HepG2 (cell line): ENCODE measurements at regions of chr5 and their contacts with region 1.

Region 1: GRCh38 chr5:74640450-74640953 is at the start of gene ENC1:
- DNase-seq: peak; percentile 95
- ATAC-seq: peak; percentile 83
- H3K4me3 ChIP-seq: peak within 1 kb of the TSS; percentile 92 to 100 (median 99)
- H3K27ac ChIP-seq: peak within 1 kb of the TSS; percentile 83
- H3K4me1 ChIP-seq: peaks cover 43% of the 10 kb centered on the region
- H3K27me3 ChIP-seq: no peaks in the 10 kb centered on the region; a peak in 2 of 5 replicates
- CTCF ChIP-seq: peak; percentile 68
- EP300 ChIP-seq: peak in 1 of 2 experiments; percentile 60; a peak in 2 of 4 replicates
- POLR2A ChIP-seq: peak in 1 of 2 experiments; percentile 98; a peak in 2 of 4 replicates
- RAD21 ChIP-seq: peak; percentile 80
- total RNA-seq, gene ENC1: 63.8 and 69.9 TPM in 2 replicates

Region 2: DNA sequence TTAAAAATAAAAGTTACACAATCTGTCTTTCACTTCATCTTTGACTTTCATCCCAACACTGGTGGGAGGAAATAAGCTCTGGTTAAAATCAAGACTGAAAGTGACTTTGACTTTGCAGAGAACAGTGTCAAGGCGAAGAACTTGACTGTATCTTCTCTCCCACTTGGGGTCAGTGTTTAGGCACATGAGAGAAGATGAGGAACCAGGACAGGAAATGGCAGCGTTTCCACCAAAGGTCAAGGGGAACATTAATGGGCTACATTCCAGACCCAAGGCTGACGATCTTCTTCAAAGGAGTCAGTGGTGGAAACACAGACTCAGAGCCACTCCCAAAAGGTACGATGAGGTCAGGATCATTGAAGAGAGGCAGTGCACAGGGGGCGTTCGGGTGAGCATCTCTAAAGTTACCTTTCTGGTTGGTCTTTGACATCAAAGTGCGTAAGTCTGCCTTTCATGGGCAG is 605.0 kb before region 1 on chr5:
- CTCF ChIA-PET with region 1: no interaction called
- POLR2A ChIA-PET with region 1: interaction called, 3 read pairs
- in situ Hi-C with region 1: loop called (anchors 10 kb)
- intact Hi-C with region 1: no loop called
- DNase-seq: peak; percentile 49
- ATAC-seq: peak; percentile 61
- H3K4me3 ChIP-seq: no peak overlapping the region
- H3K27ac ChIP-seq: no peak overlapping the region
- H3K4me1 ChIP-seq: peaks cover 6% of the 10 kb centered on the region; the same call in 1 of the 2 replicates
- H3K27me3 ChIP-seq: peaks cover 0 to 3% of the 10 kb centered on the region in 2 experiments; a peak in 2 of 5 replicates
- CTCF ChIP-seq: peak; percentile 74
- EP300 ChIP-seq: no peak
- POLR2A ChIP-seq: no peak
- RAD21 ChIP-seq: no peak

Region 3: GRCh38 chr5:74394916-74395781 is 245.4 kb before region 1 on chr5:
- CTCF ChIA-PET with region 1: no interaction called
- POLR2A ChIA-PET with region 1: interaction called, 31 read pairs
- in situ Hi-C with region 1: loop called (anchors 5 kb)
- intact Hi-C with region 1: no loop called
- DNase-seq: peak; percentile 60
- ATAC-seq: peak; percentile 81
- H3K4me3 ChIP-seq: peak overlapping the region in 1 of 3 experiments; percentile 22; a peak in 1 of 6 replicates
- H3K27ac ChIP-seq: no peak overlapping the region
- H3K4me1 ChIP-seq: peaks cover 45% of the 10 kb centered on the region
- H3K27me3 ChIP-seq: no peaks in the 10 kb centered on the region
- CTCF ChIP-seq: peak; percentile 75
- EP300 ChIP-seq: no peak
- POLR2A ChIP-seq: no peak
- RAD21 ChIP-seq: peak; percentile 75

Region 4: GRCh38 chr5:74500110-74500917 is 140.2 kb before region 1 on chr5:
- CTCF ChIA-PET with region 1: no interaction called
- POLR2A ChIA-PET with region 1: interaction called, 62 read pairs
- in situ Hi-C with region 1: loop called (anchors 5 kb)
- intact Hi-C with region 1: loop called (anchors 1 kb)
- DNase-seq: peak; percentile 96
- ATAC-seq: peak; percentile 83
- H3K4me3 ChIP-seq: peak overlapping the region; percentile 43 to 50 (median 47); a peak in 5 of 6 replicates
- H3K27ac ChIP-seq: peak overlapping the region; percentile 72
- H3K4me1 ChIP-seq: peaks cover 80% of the 10 kb centered on the region
- H3K27me3 ChIP-seq: no peaks in the 10 kb centered on the region
- CTCF ChIP-seq: no peak
- EP300 ChIP-seq: peak in 1 of 2 experiments; percentile 94; a peak in 2 of 4 replicates
- POLR2A ChIP-seq: 0 out of 4 replicates have a peak, but pooled peaks of 1 of the 2 experiments have one; percentile 19
- RAD21 ChIP-seq: no peak

Region 5: DNA sequence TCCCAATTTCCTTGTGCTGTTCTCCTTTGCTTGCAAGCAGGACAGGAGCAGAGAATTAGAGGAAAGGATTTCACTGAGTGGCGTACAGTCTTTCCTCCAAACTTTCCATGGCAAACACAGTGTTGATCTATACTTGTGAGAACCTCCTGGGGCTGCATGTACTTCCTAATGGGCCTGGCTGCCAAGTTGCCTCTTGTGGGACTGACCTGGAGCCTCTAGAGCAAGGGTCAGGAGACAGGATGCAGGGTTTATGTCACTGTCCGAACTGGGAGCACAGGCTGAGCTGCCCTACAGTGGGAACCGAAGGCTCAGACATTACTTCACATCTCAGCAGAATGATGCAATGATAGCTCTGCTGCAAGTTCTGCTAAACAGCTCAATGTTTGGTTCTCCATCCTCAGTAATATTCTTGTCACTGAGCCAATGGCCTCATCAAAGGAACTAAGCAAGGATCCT is 102.3 kb before region 1 on chr5:
- CTCF ChIA-PET with region 1: no interaction called
- POLR2A ChIA-PET with region 1: interaction called, 36 read pairs
- in situ Hi-C with region 1: no loop called
- intact Hi-C with region 1: loop called (anchors 5 kb)
- DNase-seq: peak; percentile 89
- ATAC-seq: peak; percentile 99
- H3K4me3 ChIP-seq: peak overlapping the region in 1 of 3 experiments; percentile 32; a peak in 2 of 6 replicates
- H3K27ac ChIP-seq: peak overlapping the region; percentile 51
- H3K4me1 ChIP-seq: peaks cover 61% of the 10 kb centered on the region
- H3K27me3 ChIP-seq: no peaks in the 10 kb centered on the region
- CTCF ChIP-seq: 0 out of 2 replicates have a peak, but pooled peaks have one; percentile 8
- EP300 ChIP-seq: peak; percentile 57 to 87; a peak in 2 of 4 replicates
- POLR2A ChIP-seq: 0 out of 4 replicates have a peak, but pooled peaks of 1 of the 2 experiments have one; percentile 18
- RAD21 ChIP-seq: no peak

Region 6: DNA sequence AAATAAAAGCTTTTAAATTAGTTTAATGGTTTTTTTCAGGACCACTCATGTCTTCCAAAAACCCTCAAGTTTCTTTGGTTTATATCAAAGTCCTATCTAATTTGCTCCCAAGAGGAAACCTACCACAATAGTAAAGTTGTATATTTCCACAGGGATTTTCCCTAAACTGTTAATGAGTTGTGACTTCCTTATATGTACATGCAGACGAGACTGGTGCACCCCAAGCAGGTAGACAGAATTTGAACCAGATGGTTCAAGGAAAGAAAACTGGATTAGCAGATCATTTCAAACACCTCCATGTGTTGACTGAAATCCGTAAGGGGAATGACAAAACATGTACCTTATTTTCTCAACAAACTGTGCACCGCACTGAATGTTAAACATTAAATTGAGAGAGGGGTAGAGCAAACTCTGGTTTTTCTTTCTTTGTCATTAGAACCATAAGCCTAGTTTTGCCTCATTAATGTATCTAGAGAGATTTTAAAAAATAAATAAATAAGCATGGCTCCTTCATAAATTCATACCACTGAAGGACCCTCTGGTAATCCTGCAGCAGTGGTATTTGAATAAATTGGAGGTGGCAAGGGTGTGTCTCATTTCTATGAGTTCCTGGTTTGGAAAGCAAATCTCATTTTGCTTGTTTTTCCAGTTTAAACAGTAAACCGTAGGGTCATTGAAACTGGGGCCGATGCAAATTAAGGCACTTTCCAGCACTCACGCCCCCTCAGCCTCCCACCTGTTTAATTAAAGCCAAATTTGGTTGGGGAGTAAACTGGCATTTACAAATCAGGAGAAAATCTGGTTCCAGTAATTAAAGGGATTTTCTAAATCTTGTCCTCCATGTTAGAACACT is 51.1 kb before region 1 on chr5:
- CTCF ChIA-PET with region 1: no interaction called
- POLR2A ChIA-PET with region 1: interaction called, 15 read pairs
- in situ Hi-C with region 1: loop called (anchors 5 kb)
- intact Hi-C with region 1: loop called (anchors 5 kb)
- DNase-seq: no peak
- ATAC-seq: no peak
- H3K4me3 ChIP-seq: no peak overlapping the region
- H3K27ac ChIP-seq: peak overlapping the region; percentile 38
- H3K4me1 ChIP-seq: peaks cover 81% of the 10 kb centered on the region
- H3K27me3 ChIP-seq: no peaks in the 10 kb centered on the region
- CTCF ChIP-seq: no peak
- EP300 ChIP-seq: no peak
- POLR2A ChIP-seq: no peak
- RAD21 ChIP-seq: no peak